CD4-positive, alpha-beta T cell (primary cell): ENCODE measurements at regions of chr9 and their contacts with region 1.

Region 1: GRCh38 chr9:15135164-15135792 is 171.7 kb downstream of the TTC39B start:
- DNase-seq: peak; percentile 7 to 69 (median 24)
- ATAC-seq: peak; percentile 98
- H3K4me3 ChIP-seq: no peak overlapping the region
- H3K4me3 Mint-ChIP-seq: no peak overlapping the region
- H3K27ac ChIP-seq: no peak overlapping the region
- H3K27ac Mint-ChIP-seq: no peak overlapping the region
- H3K4me1 ChIP-seq: peaks cover 5% of the 10 kb centered on the region
- H3K4me1 Mint-ChIP-seq: peaks cover 5% of the 10 kb centered on the region
- H3K27me3 ChIP-seq: no peaks in the 10 kb centered on the region
- H3K27me3 Mint-ChIP-seq: no peaks in the 10 kb centered on the region
- CTCF ChIP-seq: peak; percentile 93

Region 2: DNA sequence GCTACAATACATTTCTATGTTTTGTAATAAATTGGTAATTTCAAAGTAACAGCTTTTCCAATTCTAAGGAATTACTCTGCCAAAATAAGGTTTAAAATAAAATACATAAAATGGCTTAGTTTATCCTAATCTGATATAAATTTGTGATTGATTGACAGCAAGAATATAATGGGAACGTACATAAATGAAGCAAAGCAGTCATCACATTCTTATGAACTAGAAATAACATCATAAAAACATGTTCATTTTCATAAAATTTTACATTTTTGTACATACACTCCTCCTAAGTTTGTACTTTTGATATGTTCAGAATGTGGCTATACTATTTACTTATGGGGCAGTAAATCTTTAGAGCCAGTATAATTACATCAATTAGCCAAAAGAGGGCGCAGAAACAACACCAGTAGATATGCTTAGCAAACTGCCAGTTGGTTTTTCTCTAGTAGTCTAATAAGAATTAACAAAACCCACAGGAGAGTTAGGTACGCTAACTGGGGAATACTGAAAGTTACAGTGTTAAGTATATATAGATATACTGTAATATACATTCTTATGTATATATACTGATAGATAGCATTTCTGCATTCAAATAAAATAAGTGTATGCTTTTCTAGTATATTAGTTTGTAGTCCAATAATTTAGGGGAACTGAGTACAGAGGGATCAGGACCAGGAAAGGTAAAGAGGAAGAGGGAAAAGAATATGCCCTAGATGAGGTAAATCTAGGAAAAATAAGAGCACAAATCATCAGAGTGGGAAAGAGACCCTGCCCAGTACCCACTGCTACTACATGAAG is 518.9 kb before region 1 on chr9:
- CTCF ChIA-PET with region 1: no interaction called
- POLR2A ChIA-PET with region 1: no interaction called
- intact Hi-C with region 1: loop called (anchors 1 to 5 kb)
- DNase-seq: peak in 3 of 14 experiments; percentile 50 to 54 (median 51)
- ATAC-seq: no peak
- H3K4me3 ChIP-seq: no peak overlapping the region
- H3K4me3 Mint-ChIP-seq: no peak overlapping the region
- H3K27ac ChIP-seq: no peak overlapping the region
- H3K27ac Mint-ChIP-seq: no peak overlapping the region
- H3K4me1 ChIP-seq: no peaks in the 10 kb centered on the region
- H3K4me1 Mint-ChIP-seq: no peaks in the 10 kb centered on the region
- H3K27me3 ChIP-seq: no peaks in the 10 kb centered on the region
- H3K27me3 Mint-ChIP-seq: no peaks in the 10 kb centered on the region
- CTCF ChIP-seq: peak; percentile 65

Region 3: DNA sequence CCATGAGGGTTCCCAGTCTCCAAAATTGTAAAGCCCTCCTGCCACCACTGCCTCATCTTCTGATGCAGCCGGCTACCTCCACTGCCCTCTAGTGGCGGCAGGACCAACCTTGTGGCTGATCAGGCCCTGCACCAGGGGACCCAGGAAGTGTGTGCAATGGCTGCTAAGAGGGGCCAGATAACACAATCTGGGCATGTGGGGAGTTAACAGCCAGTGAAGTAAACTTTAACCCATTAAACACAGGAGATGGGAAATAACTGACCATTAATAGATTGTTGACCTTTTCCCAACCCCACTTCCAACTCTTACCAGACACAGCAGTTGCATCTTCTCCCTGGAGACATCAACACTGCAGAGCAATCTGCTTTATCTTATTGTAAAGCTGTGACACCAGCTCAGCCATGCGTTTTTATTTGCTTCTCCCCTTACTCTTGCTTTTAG is 288.4 kb before region 1 on chr9:
- CTCF ChIA-PET with region 1: no interaction called
- POLR2A ChIA-PET with region 1: no interaction called
- intact Hi-C with region 1: loop called in 1 of 2 experiments (anchors 10 kb)
- DNase-seq: peak; percentile 13 to 52 (median 32)
- ATAC-seq: no peak
- H3K4me3 ChIP-seq: no peak overlapping the region
- H3K4me3 Mint-ChIP-seq: no peak overlapping the region
- H3K27ac ChIP-seq: no peak overlapping the region
- H3K27ac Mint-ChIP-seq: no peak overlapping the region
- H3K4me1 ChIP-seq: no peaks in the 10 kb centered on the region
- H3K4me1 Mint-ChIP-seq: no peaks in the 10 kb centered on the region
- H3K27me3 ChIP-seq: peaks cover 5 to 7% of the 10 kb centered on the region in 2 experiments
- H3K27me3 Mint-ChIP-seq: peaks cover 41% of the 10 kb centered on the region
- CTCF ChIP-seq: peak; percentile 39

Region 4: DNA sequence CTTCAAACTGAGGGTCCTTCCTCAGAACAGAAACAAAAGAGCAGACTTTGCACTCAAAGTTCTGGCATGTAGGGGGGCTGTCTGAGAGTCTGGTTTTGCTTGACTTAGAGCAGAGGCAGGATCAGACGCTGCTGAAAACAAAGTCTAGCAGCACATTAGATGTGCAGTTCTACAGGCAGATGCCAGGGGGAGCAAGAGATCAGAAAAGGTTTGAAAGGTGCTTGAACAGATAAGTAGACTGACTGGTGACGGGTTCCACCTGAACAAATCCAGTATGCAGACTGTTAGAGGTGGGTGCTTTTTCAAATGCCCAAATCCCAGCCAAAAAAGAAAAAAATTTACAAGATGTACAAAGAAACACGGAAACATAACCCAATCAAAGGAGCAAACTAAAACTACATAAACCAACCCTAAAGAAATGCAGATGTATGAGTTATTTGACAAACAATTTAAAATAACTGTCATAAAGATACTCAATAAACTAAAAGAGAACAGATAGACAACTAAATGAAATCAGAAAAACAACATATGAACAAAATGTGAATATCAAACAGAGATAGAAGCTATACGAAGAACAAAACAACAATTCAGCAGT is 30.4 kb before region 1 on chr9:
- CTCF ChIA-PET with region 1: interaction called, 9 read pairs
- POLR2A ChIA-PET with region 1: interaction called, 3 read pairs
- intact Hi-C with region 1: loop called (anchors 1 kb)
- DNase-seq: peak in 12 of 14 experiments; percentile 3 to 67 (median 22)
- ATAC-seq: peak; percentile 93
- H3K4me3 ChIP-seq: no peak overlapping the region
- H3K4me3 Mint-ChIP-seq: no peak overlapping the region
- H3K27ac ChIP-seq: no peak overlapping the region
- H3K27ac Mint-ChIP-seq: no peak overlapping the region
- H3K4me1 ChIP-seq: no peaks in the 10 kb centered on the region
- H3K4me1 Mint-ChIP-seq: no peaks in the 10 kb centered on the region
- H3K27me3 ChIP-seq: no peaks in the 10 kb centered on the region
- H3K27me3 Mint-ChIP-seq: peaks cover 4% of the 10 kb centered on the region
- CTCF ChIP-seq: peak; percentile 89

Region 5: GRCh38 chr9:15153961-15154360 is 18.7 kb after region 1 on chr9:
- CTCF ChIA-PET with region 1: no interaction called
- POLR2A ChIA-PET with region 1: no interaction called
- intact Hi-C with region 1: loop called in 1 of 2 experiments (anchors 2 kb)
- DNase-seq: no peak
- ATAC-seq: no peak
- H3K4me3 ChIP-seq: no peak overlapping the region
- H3K4me3 Mint-ChIP-seq: no peak overlapping the region
- H3K27ac ChIP-seq: no peak overlapping the region
- H3K27ac Mint-ChIP-seq: no peak overlapping the region
- H3K4me1 ChIP-seq: no peaks in the 10 kb centered on the region
- H3K4me1 Mint-ChIP-seq: no peaks in the 10 kb centered on the region
- H3K27me3 ChIP-seq: no peaks in the 10 kb centered on the region
- H3K27me3 Mint-ChIP-seq: peaks cover 28% of the 10 kb centered on the region
- CTCF ChIP-seq: no peak

Region 6: DNA sequence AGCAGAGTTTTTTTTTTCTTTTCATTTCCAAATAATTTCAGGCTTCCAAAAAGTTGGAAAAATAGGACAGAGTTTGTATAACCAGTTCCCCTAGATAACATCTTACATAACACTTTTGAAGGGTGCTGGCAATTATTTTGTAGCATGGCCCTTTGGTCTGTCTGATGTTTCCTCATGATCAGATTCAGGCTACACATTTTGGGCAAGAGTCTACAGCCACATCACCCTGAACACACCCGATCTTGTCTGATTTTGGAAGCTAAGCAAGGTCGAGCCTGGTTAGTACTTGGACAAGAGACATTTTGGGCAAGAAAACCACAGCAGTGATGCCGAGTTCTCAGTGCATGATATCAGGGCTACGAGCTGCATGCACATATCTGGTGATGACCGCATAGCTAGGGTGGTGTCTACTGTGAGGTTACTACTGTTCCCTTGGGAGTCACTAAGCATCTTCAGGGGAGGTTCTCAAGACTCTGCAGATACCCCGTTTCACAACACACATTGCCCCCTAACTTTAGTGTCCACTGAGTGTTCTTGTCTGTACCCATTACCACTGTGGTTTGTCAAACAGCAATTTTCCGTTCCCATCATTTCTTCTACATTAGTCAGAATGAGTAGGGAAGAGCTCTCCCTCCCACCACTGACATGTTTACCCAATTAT is 85.5 kb after region 1 on chr9:
- CTCF ChIA-PET with region 1: no interaction called
- POLR2A ChIA-PET with region 1: no interaction called
- intact Hi-C with region 1: no loop called
- DNase-seq: no peak
- ATAC-seq: no peak
- H3K4me3 ChIP-seq: no peak overlapping the region
- H3K4me3 Mint-ChIP-seq: no peak overlapping the region
- H3K27ac ChIP-seq: no peak overlapping the region
- H3K27ac Mint-ChIP-seq: peak overlapping the region; percentile 52
- H3K4me1 ChIP-seq: no peaks in the 10 kb centered on the region
- H3K4me1 Mint-ChIP-seq: peaks cover 19% of the 10 kb centered on the region
- H3K27me3 ChIP-seq: no peaks in the 10 kb centered on the region
- H3K27me3 Mint-ChIP-seq: no peaks in the 10 kb centered on the region
- CTCF ChIP-seq: no peak